Activated naive CD4-positive, alpha-beta T cell treated with anti-CD3 and anti-CD28 coated beads for 36 hours (primary cell): ENCODE measurements at regions of chr6 and their contacts with region 1.

Region 1: GRCh38 chr6:41072676-41073623 is at the start of gene NFYA:
- DNase-seq: peak; percentile 100
- H3K4me3 Mint-ChIP-seq: peak within 1 kb of the TSS; percentile 93
- H3K27ac Mint-ChIP-seq: peak within 1 kb of the TSS; percentile 98
- H3K4me1 Mint-ChIP-seq: peaks cover 50% of the 10 kb centered on the region
- H3K27me3 Mint-ChIP-seq: no peaks in the 10 kb centered on the region
- total RNA-seq, gene NFYA: 38.0 to 38.7 TPM

Region 2: DNA sequence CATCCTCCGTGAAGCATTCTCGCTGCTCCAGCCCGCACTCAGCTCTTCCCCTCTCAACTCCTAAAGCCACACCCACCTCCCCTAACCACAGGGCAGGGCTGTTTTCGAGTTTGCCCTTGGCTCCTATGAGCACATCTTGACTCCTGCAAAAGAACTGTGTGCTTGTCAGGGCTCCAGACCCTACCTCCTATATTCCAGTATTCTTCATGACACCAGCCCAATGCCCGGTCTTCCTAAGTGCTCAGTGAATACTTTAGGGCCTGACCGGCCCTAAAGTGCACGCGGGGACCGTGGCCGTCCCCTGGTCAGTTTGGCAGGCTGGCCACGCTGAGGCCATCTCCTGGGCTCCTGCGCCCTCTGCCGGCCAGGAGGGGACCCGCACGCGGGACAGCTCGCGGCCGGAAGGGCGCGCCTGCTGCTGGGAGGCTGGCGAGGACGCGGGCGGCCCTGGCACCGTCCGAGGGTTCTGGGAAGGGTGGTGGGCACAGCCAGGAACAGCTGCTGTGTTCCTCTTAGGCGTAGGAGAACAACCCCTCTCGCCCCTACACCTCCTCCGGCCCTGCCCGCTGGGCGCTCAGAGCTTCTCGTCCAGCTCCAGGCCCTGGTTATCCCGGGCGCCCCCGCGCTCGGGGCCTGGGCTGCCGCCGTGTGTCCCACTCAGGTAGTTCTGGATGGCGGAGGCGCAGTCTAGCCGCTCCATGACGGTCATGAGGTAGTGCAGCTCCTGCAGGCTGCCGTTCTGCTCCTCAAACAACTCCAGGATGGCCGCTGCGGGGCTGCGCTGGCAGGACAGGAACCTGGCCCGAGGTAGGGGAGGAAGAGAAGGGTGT is 44.9 kb before region 1 on chr6:
- CTCF ChIA-PET with region 1: interaction called, 7 read pairs
- intact Hi-C with region 1: loop called (anchors 2 kb)
- DNase-seq: peak; percentile 79
- H3K4me3 Mint-ChIP-seq: peak overlapping the region; percentile 80
- H3K27ac Mint-ChIP-seq: peak overlapping the region; percentile 62
- H3K4me1 Mint-ChIP-seq: peaks cover 17% of the 10 kb centered on the region
- H3K27me3 Mint-ChIP-seq: no peaks in the 10 kb centered on the region

Region 3: DNA sequence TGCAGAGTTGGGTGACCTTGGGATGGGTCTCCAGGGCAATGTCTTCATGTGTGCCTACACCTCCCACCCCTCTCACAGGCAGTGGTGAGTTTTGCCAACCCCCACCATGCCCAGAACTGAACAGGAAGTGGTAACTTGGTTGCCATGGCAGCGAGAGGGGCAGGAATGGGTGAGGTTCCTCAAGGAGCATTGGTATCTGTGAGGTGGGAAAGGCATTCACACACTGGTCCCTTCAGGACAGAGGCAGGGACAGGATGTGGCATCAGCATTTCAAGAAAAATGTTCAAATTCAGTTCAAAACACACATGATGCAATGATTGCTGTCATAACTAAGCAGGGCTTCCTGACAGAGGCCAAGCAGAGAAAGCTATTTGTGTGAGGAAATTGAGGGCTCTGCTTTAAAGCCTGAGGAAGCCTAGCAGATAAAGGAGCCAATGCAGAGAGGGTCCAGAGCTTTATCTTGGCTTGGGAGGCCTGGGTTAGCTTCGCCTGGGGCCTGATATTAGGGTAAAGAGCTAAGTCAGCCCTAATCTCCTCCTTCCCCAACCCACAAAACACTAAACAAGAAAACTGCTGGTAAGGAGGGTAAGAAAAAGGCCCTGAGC is 127.4 kb after region 1 on chr6:
- CTCF ChIA-PET with region 1: no interaction called
- intact Hi-C with region 1: loop called (anchors 1 kb)
- DNase-seq: peak; percentile 87
- H3K4me3 Mint-ChIP-seq: peak overlapping the region; percentile 76
- H3K27ac Mint-ChIP-seq: peak overlapping the region; percentile 94
- H3K4me1 Mint-ChIP-seq: peaks cover 65% of the 10 kb centered on the region
- H3K27me3 Mint-ChIP-seq: no peaks in the 10 kb centered on the region

Region 4: DNA sequence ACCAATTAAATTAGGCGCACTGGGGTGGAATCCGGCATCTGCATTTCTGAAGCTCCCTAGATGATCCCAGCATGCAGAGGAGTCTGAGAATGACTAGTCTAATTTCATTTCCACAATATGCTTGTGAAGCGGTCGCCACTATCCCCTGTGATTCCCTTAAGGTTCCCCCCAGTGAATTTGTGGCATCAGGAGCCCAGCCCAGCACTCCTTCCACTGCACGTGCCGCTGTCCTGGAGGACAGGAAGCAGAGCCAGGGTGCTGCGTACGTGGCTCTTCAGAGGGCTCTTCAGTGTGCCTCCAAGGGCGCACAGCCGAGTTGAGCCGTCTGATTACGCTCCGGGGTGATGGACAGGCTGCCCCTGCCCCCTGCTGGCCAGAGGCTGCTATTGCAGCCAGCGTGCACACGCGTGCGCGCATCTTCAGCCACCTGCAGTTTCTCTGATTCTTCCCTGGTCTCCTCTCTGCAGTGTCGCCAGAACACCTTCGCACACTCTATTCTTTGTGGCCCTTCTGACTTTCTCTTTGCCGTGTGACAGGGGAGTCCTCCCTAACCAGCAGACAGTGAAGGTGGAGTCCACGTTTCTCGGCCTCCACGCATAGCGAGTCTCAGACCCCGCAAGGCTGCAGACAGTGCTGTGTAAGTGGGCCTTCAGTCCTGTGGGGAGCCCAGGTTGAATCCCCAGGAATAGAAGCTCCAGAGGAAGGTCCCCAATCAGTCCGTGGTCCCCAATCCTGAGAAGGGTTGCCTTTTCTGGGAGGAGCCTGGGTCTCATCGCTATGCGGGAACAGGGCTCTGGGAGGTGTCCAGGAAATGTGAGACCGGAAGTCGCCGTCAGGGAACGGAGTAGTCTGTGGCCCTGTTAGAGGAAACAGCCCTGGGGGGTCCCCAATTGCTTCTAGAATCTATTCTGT is 246.0 kb after region 1 on chr6:
- CTCF ChIA-PET with region 1: interaction called, 7 read pairs
- intact Hi-C with region 1: loop called (anchors 1 kb)
- DNase-seq: peak; percentile 92
- H3K4me3 Mint-ChIP-seq: peak overlapping the region; percentile 71
- H3K27ac Mint-ChIP-seq: peak overlapping the region; percentile 73
- H3K4me1 Mint-ChIP-seq: peaks cover 13% of the 10 kb centered on the region
- H3K27me3 Mint-ChIP-seq: peaks cover 8% of the 10 kb centered on the region

Region 5: DNA sequence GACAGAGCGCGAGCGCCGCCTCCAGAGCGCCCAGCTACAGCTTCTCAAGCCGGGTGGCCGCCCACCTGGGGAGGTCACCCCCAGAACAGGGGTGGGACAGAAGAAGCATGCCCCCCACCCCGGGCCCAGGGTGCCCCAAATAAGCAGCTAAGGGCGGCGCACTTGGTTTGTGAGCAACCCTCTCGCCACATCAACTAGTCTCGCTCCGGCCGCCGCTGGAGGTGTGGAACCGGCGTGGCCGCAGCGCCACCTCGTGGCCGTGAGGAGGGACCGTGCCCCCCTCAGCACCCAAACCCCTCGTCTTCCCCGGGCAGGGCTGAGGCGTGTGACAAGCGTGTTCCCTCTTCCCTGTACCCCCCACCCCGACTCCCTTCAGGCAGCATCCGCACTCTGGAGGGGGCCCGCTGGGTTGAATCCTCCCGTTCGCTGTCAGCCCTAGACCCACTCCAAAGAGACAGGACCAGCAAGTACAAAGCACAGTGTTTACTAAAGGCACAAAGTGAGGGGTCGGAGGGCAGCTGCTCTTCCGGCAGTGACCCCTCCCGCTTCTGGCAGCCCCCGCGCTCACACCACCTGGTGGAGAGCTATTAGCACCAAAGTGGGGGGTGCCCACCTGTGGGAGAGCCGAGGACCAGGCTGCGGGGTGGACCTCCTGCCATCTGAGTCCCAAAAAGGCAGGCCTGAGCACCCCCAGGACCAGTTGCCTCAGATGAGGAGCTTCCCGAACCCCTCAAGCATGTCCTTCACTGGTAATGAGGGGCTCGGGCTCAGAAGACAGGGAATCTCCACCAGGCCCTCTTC is 610.8 kb after region 1 on chr6:
- CTCF ChIA-PET with region 1: no interaction called
- intact Hi-C with region 1: loop called (anchors 10 kb)
- DNase-seq: peak; percentile 84
- H3K4me3 Mint-ChIP-seq: peak overlapping the region; percentile 75
- H3K27ac Mint-ChIP-seq: peak overlapping the region; percentile 87
- H3K4me1 Mint-ChIP-seq: peaks cover 8% of the 10 kb centered on the region
- H3K27me3 Mint-ChIP-seq: no peaks in the 10 kb centered on the region